CD8-positive, alpha-beta T cell (primary cell): ENCODE measurements at regions of chr6 and their contacts with region 1.

Region 1: DNA sequence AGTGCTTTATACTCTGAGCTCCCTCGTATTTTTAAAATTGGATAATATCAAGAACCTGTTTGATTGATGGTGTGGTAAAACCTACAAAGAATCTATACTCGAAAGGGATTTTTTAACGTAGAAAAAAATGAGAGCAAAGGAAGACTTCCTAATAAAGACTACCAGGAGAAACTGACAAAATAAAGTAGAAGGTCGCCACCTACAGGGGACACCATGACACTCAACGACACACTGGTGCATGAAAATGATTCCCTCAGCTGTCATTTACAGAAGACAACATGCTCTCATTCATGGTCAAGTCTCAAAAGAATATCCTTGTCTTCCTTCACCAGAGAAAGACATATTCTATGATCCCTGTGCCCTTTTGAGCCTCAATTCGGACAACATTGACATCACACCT is 10.1 kb upstream of the NHSL1 start:
- DNase-seq: peak in 6 of 9 experiments; percentile 5 to 59 (median 32)
- ATAC-seq: no peak
- H3K4me3 ChIP-seq: no peak overlapping the region
- H3K4me3 Mint-ChIP-seq: no peak overlapping the region
- H3K27ac ChIP-seq: no peak overlapping the region
- H3K27ac Mint-ChIP-seq: no peak overlapping the region
- H3K4me1 ChIP-seq: no peaks in the 10 kb centered on the region
- H3K4me1 Mint-ChIP-seq: peaks cover 4% of the 10 kb centered on the region
- H3K27me3 ChIP-seq: peaks cover 0 to 2% of the 10 kb centered on the region in 2 experiments
- H3K27me3 Mint-ChIP-seq: no peaks in the 10 kb centered on the region
- CTCF ChIP-seq: peak; percentile 52

Region 2: GRCh38 chr6:138393871-138394783 is 115.2 kb before region 1 on chr6:
- CTCF ChIA-PET with region 1: no interaction called
- POLR2A ChIA-PET with region 1: no interaction called
- intact Hi-C with region 1: no loop called
- DNase-seq: no peak
- ATAC-seq: no peak
- H3K4me3 ChIP-seq: no peak overlapping the region
- H3K4me3 Mint-ChIP-seq: no peak overlapping the region
- H3K27ac ChIP-seq: no peak overlapping the region
- H3K27ac Mint-ChIP-seq: no peak overlapping the region
- H3K4me1 ChIP-seq: no peaks in the 10 kb centered on the region
- H3K4me1 Mint-ChIP-seq: no peaks in the 10 kb centered on the region
- H3K27me3 ChIP-seq: no peaks in the 10 kb centered on the region
- H3K27me3 Mint-ChIP-seq: peaks cover 6% of the 10 kb centered on the region
- CTCF ChIP-seq: no peak

Region 3: DNA sequence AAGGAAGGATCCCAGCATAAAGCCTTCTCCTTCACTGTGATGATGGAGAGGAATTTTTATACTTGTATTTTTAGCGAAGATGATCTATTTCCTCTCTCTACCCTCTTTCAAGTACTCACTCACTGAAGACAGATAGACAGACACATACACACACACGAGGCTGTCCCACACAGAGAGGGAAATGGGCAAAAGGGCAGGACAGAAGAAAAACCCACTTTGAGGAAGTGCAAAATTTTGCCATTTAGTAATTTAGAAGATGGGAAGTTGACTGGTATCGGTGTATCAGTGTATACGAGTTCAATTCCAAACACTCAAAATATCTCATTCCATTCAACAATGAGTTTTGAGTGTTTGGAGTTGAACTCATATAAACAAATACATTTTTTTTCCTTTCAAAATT is 74.4 kb before region 1 on chr6:
- CTCF ChIA-PET with region 1: interaction called, 200 read pairs
- POLR2A ChIA-PET with region 1: no interaction called
- intact Hi-C with region 1: no loop called
- DNase-seq: no peak
- ATAC-seq: no peak
- H3K4me3 ChIP-seq: no peak overlapping the region
- H3K4me3 Mint-ChIP-seq: no peak overlapping the region
- H3K27ac ChIP-seq: no peak overlapping the region
- H3K27ac Mint-ChIP-seq: no peak overlapping the region
- H3K4me1 ChIP-seq: no peaks in the 10 kb centered on the region
- H3K4me1 Mint-ChIP-seq: no peaks in the 10 kb centered on the region
- H3K27me3 ChIP-seq: no peaks in the 10 kb centered on the region
- H3K27me3 Mint-ChIP-seq: peaks cover 3% of the 10 kb centered on the region
- CTCF ChIP-seq: no peak

Region 4: GRCh38 chr6:138455746-138456400 is 53.5 kb before region 1 on chr6:
- CTCF ChIA-PET with region 1: interaction called, 17 read pairs
- POLR2A ChIA-PET with region 1: interaction called, 5 read pairs
- intact Hi-C with region 1: no loop called
- DNase-seq: peak in 3 of 9 experiments; percentile 46 to 66 (median 61)
- ATAC-seq: peak; percentile 68
- H3K4me3 ChIP-seq: peak overlapping the region; percentile 1 to 40
- H3K4me3 Mint-ChIP-seq: peak overlapping the region; percentile 75
- H3K27ac ChIP-seq: peak overlapping the region; percentile 20 to 53
- H3K27ac Mint-ChIP-seq: peak overlapping the region; percentile 89
- H3K4me1 ChIP-seq: peaks cover 16% of the 10 kb centered on the region
- H3K4me1 Mint-ChIP-seq: peaks cover 26% of the 10 kb centered on the region
- H3K27me3 ChIP-seq: no peaks in the 10 kb centered on the region
- H3K27me3 Mint-ChIP-seq: no peaks in the 10 kb centered on the region
- CTCF ChIP-seq: no peak

Region 5: GRCh38 chr6:138526822-138527235 is 17.5 kb after region 1 on chr6:
- CTCF ChIA-PET with region 1: interaction called, 40 read pairs
- POLR2A ChIA-PET with region 1: no interaction called
- intact Hi-C with region 1: no loop called
- DNase-seq: no peak
- ATAC-seq: no peak
- H3K4me3 ChIP-seq: no peak overlapping the region
- H3K4me3 Mint-ChIP-seq: no peak overlapping the region
- H3K27ac ChIP-seq: no peak overlapping the region
- H3K27ac Mint-ChIP-seq: no peak overlapping the region
- H3K4me1 ChIP-seq: no peaks in the 10 kb centered on the region
- H3K4me1 Mint-ChIP-seq: no peaks in the 10 kb centered on the region
- H3K27me3 ChIP-seq: no peaks in the 10 kb centered on the region
- H3K27me3 Mint-ChIP-seq: peaks cover 4% of the 10 kb centered on the region
- CTCF ChIP-seq: no peak